GM12878 (cell line): ENCODE measurements at regions of chr2 and their contacts with region 1.

Region 1: GRCh38 chr2:156341452-156342253 is 9.1 kb upstream of the NR4A2 start:
- DNase-seq: peak; percentile 89
- ATAC-seq: peak; percentile 86
- H3K4me3 ChIP-seq: peak overlapping the region; percentile 93
- H3K27ac ChIP-seq: peak overlapping the region; percentile 100
- H3K4me1 ChIP-seq: peaks cover 15% of the 10 kb centered on the region
- H3K27me3 ChIP-seq: no peaks in the 10 kb centered on the region
- CTCF ChIP-seq: no peak
- EP300 ChIP-seq: no peak; a peak in 1 of 4 replicates
- POLR2A ChIP-seq: peak; percentile 90
- RAD21 ChIP-seq: no peak; the same call in 1 of the 2 replicates

Region 2: GRCh38 chr2:156380117-156380645 is 38.5 kb after region 1 on chr2:
- CTCF ChIA-PET with region 1: no interaction called
- POLR2A ChIA-PET with region 1: interaction called, 8 read pairs
- RAD21 ChIA-PET with region 1: interaction called, 12 read pairs
- SMC1A ChIA-PET with region 1: interaction called, 7 read pairs
- in situ Hi-C with region 1: no loop called
- intact Hi-C with region 1: loop called (anchors 2 kb)
- DNase-seq: peak; percentile 45
- ATAC-seq: peak; percentile 92
- H3K4me3 ChIP-seq: no peak overlapping the region
- H3K27ac ChIP-seq: no peak overlapping the region
- H3K4me1 ChIP-seq: peaks cover 12% of the 10 kb centered on the region
- H3K27me3 ChIP-seq: no peaks in the 10 kb centered on the region
- CTCF ChIP-seq: no peak
- EP300 ChIP-seq: no peak
- POLR2A ChIP-seq: no peak
- RAD21 ChIP-seq: no peak

Region 3: GRCh38 chr2:156385242-156385641 is 43.6 kb after region 1 on chr2:
- CTCF ChIA-PET with region 1: no interaction called
- POLR2A ChIA-PET with region 1: interaction called, 8 read pairs
- RAD21 ChIA-PET with region 1: interaction called, 12 read pairs
- SMC1A ChIA-PET with region 1: interaction called, 5 read pairs
- in situ Hi-C with region 1: loop called (anchors 10 kb)
- intact Hi-C with region 1: loop called (anchors 2 kb)
- DNase-seq: no peak
- ATAC-seq: no peak
- H3K4me3 ChIP-seq: no peak overlapping the region
- H3K27ac ChIP-seq: no peak overlapping the region
- H3K4me1 ChIP-seq: peaks cover 7% of the 10 kb centered on the region
- H3K27me3 ChIP-seq: no peaks in the 10 kb centered on the region
- CTCF ChIP-seq: no peak
- EP300 ChIP-seq: no peak
- POLR2A ChIP-seq: no peak
- RAD21 ChIP-seq: no peak

Region 4: GRCh38 chr2:156400706-156401678 is 59.3 kb after region 1 on chr2:
- CTCF ChIA-PET with region 1: interaction called, 4 read pairs
- POLR2A ChIA-PET with region 1: interaction called, 27 read pairs
- RAD21 ChIA-PET with region 1: interaction called, 28 read pairs
- SMC1A ChIA-PET with region 1: interaction called, 44 read pairs
- in situ Hi-C with region 1: loop called (anchors 10 kb)
- intact Hi-C with region 1: loop called (anchors 1 kb)
- DNase-seq: peak; percentile 82
- ATAC-seq: peak; percentile 78
- H3K4me3 ChIP-seq: peak overlapping the region; percentile 70
- H3K27ac ChIP-seq: peak overlapping the region; percentile 86
- H3K4me1 ChIP-seq: peaks cover 17% of the 10 kb centered on the region
- H3K27me3 ChIP-seq: no peaks in the 10 kb centered on the region
- CTCF ChIP-seq: no peak
- EP300 ChIP-seq: peak in 1 of 2 experiments; percentile 83; a peak in 1 of 4 replicates
- POLR2A ChIP-seq: no peak
- RAD21 ChIP-seq: no peak

Region 5: GRCh38 chr2:156476850-156477206 is 135.2 kb after region 1 on chr2:
- CTCF ChIA-PET with region 1: no interaction called
- POLR2A ChIA-PET with region 1: interaction called, 3 read pairs
- RAD21 ChIA-PET with region 1: interaction called, 4 read pairs
- SMC1A ChIA-PET with region 1: interaction called, 22 read pairs
- in situ Hi-C with region 1: no loop called
- intact Hi-C with region 1: no loop called
- DNase-seq: peak; percentile 77
- ATAC-seq: peak; percentile 86
- H3K4me3 ChIP-seq: no peak overlapping the region
- H3K27ac ChIP-seq: peak overlapping the region; percentile 66
- H3K4me1 ChIP-seq: peaks cover 39% of the 10 kb centered on the region; the same call in 1 of the 2 replicates
- H3K27me3 ChIP-seq: no peaks in the 10 kb centered on the region
- CTCF ChIP-seq: no peak
- EP300 ChIP-seq: peak; percentile 24 to 52; a peak in 1 of 4 replicates
- POLR2A ChIP-seq: no peak
- RAD21 ChIP-seq: no peak

Region 6: DNA sequence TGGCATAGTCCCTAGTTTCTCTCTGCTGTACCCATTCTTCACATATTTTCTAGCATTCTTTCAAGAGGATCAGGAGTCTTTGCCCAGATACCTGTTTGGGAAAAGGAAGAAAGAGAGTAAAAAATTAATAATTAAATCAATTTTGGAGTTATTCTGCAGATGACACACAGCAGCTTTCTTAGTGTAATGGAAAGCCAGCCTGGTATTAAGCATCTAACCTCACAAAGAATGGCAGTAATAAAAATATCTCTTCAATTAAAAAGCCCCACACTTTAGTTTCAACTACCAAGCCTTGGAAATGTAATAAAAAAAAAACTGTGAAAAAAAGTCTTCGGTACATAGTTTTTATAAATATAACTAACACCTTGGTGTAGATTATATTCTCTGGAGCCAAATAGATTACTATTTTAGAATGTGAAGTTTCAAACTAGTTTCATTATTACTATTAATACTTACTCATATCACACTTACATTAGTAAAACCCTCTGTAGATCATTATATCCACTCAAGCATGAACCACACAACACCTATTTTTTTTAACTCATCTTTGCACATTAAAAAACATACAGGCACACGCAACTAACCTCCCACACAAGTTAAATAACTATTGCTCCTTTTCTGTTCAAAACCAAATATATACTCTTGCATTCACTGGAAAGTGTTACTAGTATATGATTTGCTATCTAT is 185.4 kb after region 1 on chr2:
- CTCF ChIA-PET with region 1: interaction called, 5 read pairs
- POLR2A ChIA-PET with region 1: interaction called, 4 read pairs
- RAD21 ChIA-PET with region 1: interaction called, 7 read pairs
- SMC1A ChIA-PET with region 1: interaction called, 7 read pairs
- in situ Hi-C with region 1: no loop called
- intact Hi-C with region 1: loop called (anchors 2 kb)
- DNase-seq: no peak
- ATAC-seq: peak; percentile 94
- H3K4me3 ChIP-seq: no peak overlapping the region
- H3K27ac ChIP-seq: peak overlapping the region; percentile 81
- H3K4me1 ChIP-seq: peaks cover 16% of the 10 kb centered on the region
- H3K27me3 ChIP-seq: no peaks in the 10 kb centered on the region
- CTCF ChIP-seq: no peak
- EP300 ChIP-seq: peak; percentile 96 to 99
- POLR2A ChIP-seq: no peak
- RAD21 ChIP-seq: no peak

Region 7: DNA sequence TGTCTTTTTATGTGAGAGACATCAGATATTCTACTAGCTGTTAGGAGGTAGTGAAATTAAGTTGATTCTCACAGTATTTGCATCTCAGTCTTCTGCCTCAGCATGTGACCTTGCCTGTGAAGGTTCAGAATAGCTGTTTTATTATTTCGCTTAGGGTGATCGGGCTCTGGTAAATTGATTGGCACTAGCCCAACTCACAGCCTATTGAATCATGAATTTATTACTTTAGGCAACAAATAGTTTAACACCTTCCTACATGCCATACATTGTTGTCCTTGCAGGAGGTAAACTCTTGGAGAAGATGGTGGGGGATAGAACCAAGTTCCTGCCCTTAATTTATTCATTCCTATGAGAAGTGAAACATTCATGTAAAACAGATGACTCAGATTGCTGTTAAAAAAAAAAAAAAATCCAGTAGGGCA is 196.4 kb after region 1 on chr2:
- CTCF ChIA-PET with region 1: interaction called, 3 read pairs
- POLR2A ChIA-PET with region 1: interaction called, 12 read pairs
- RAD21 ChIA-PET with region 1: interaction called, 13 read pairs
- SMC1A ChIA-PET with region 1: interaction called, 7 read pairs
- in situ Hi-C with region 1: no loop called
- intact Hi-C with region 1: loop called (anchors 5 kb)
- DNase-seq: peak; percentile 53
- ATAC-seq: peak; percentile 87
- H3K4me3 ChIP-seq: no peak overlapping the region
- H3K27ac ChIP-seq: peak overlapping the region; percentile 69
- H3K4me1 ChIP-seq: peaks cover 49% of the 10 kb centered on the region
- H3K27me3 ChIP-seq: no peaks in the 10 kb centered on the region
- CTCF ChIP-seq: no peak
- EP300 ChIP-seq: no peak
- POLR2A ChIP-seq: peak; percentile 49; the same call in 1 of the 2 replicates
- RAD21 ChIP-seq: no peak

Region 8: GRCh38 chr2:156553714-156554442 is 212.2 kb after region 1 on chr2:
- CTCF ChIA-PET with region 1: no interaction called
- POLR2A ChIA-PET with region 1: no interaction called
- RAD21 ChIA-PET with region 1: no interaction called
- SMC1A ChIA-PET with region 1: no interaction called
- in situ Hi-C with region 1: no loop called
- intact Hi-C with region 1: no loop called
- DNase-seq: no peak
- ATAC-seq: peak; percentile 49; the same call in 2 of the 3 replicates
- H3K4me3 ChIP-seq: no peak overlapping the region
- H3K27ac ChIP-seq: no peak overlapping the region
- H3K4me1 ChIP-seq: no peaks in the 10 kb centered on the region
- H3K27me3 ChIP-seq: no peaks in the 10 kb centered on the region
- CTCF ChIP-seq: no peak
- EP300 ChIP-seq: no peak
- POLR2A ChIP-seq: no peak
- RAD21 ChIP-seq: no peak